AG04450 (cell line): ENCODE measurements at regions of chr11 and their contacts with region 1.

Region 1: DNA sequence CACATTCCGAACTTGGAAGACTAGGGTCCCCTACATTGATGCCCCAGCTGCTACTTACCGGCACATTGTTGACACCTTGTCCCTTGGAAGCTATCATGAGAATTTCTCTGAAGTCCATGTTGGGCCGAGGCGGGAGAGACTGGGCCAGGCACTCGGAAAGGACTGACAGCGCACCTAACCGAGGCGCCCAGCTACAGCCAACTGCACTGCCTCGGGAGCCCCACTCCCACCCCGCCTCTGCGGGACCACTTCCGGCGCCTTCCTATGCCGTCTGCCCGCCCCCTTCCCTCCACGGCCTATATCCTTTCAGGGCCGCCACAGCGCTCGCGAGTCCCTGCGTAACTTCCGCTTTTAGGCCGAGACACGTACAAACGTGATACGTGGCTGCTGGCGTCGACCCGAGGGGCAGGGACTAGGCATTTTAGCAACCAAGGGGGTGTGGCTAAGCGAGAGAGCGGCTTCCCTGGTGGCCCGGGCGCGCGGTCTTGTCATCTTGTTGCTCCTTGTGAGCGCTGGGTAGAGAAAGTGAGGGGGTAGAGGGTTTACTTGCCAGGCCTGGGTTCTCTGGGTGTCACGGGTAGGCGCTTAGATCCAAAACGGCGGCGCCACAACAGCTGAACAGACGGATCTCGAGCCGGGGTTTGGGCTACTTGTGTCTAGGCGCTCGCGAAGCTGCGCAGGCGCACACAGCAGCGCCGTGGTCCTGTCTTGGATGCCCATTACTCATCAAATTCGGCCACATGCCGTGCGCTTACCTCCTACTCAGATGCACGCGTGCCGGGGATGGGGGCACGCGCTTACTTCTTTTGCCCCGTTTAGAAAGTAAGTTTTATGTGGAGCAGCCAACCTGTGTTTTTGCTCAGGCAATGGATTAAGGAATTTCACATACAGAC is at the start of gene SPTY2D1:
- DNase-seq: peak; percentile 98
- H3K4me3 ChIP-seq: peak within 1 kb of the TSS; percentile 70
- H3K27ac ChIP-seq: peak within 1 kb of the TSS; percentile 98
- H3K27me3 ChIP-seq: no peaks in the 10 kb centered on the region
- CTCF ChIP-seq: no peak
- polyA plus RNA-seq, gene SPTY2D1: 13.7 and 18.6 TPM in 2 replicates

Region 2: DNA sequence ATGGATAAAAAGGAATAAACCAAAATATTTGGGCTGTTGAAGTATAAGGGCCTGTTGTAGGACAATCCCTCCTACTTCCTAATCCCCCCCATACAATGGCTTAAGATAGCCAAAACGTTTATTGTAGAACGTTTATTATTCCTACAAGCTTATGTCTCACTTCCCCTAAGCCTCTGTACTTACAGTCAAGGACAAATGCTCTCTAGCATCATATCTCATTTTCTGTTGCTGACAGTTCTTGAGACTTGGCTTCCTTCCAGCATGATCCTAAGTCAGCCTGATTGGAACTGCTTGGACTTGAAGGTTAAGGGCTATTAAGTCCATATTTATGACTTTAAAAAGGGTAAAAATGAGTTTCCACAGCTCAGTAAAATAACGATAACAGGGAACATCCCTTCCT is 26.0 kb before region 1 on chr11:
- CTCF ChIA-PET with region 1: no interaction called
- POLR2A ChIA-PET with region 1: interaction called, 10 read pairs
- DNase-seq: no peak
- H3K4me3 ChIP-seq: no peak overlapping the region
- H3K27ac ChIP-seq: no peak overlapping the region
- H3K27me3 ChIP-seq: no peaks in the 10 kb centered on the region
- CTCF ChIP-seq: no peak

Region 3: GRCh38 chr11:18617688-18618341 is 16.6 kb before region 1 on chr11:
- CTCF ChIA-PET with region 1: interaction called, 5 read pairs
- POLR2A ChIA-PET with region 1: interaction called, 11 read pairs
- DNase-seq: no peak
- H3K4me3 ChIP-seq: peak overlapping the region; percentile 8
- H3K27ac ChIP-seq: peak overlapping the region; percentile 40
- H3K27me3 ChIP-seq: no peaks in the 10 kb centered on the region
- CTCF ChIP-seq: no peak

Region 4: GRCh38 chr11:18650859-18651557 is 16.6 kb after region 1 on chr11:
- CTCF ChIA-PET with region 1: interaction called, 12 read pairs
- POLR2A ChIA-PET with region 1: interaction called, 4 read pairs
- DNase-seq: peak; percentile 42
- H3K4me3 ChIP-seq: no peak overlapping the region
- H3K27ac ChIP-seq: no peak overlapping the region
- H3K27me3 ChIP-seq: peaks cover 3% of the 10 kb centered on the region
- CTCF ChIP-seq: peak; percentile 76